Left ventricle myocardium inferior (tissue), 1 donor: ENCODE measurements at regions of chr2 and their contacts with region 1.

Region 1: GRCh38 chr2:44715671-44716081 is 225.8 kb upstream of the SIX3 start:
- DNase-seq: no peak
- H3K4me3 ChIP-seq: no peak overlapping the region
- H3K27ac ChIP-seq: no peak overlapping the region
- H3K4me1 ChIP-seq: peaks cover 3% of the 10 kb centered on the region
- H3K27me3 ChIP-seq: no peaks in the 10 kb centered on the region
- CTCF ChIP-seq: peak; percentile 65

Region 2: DNA sequence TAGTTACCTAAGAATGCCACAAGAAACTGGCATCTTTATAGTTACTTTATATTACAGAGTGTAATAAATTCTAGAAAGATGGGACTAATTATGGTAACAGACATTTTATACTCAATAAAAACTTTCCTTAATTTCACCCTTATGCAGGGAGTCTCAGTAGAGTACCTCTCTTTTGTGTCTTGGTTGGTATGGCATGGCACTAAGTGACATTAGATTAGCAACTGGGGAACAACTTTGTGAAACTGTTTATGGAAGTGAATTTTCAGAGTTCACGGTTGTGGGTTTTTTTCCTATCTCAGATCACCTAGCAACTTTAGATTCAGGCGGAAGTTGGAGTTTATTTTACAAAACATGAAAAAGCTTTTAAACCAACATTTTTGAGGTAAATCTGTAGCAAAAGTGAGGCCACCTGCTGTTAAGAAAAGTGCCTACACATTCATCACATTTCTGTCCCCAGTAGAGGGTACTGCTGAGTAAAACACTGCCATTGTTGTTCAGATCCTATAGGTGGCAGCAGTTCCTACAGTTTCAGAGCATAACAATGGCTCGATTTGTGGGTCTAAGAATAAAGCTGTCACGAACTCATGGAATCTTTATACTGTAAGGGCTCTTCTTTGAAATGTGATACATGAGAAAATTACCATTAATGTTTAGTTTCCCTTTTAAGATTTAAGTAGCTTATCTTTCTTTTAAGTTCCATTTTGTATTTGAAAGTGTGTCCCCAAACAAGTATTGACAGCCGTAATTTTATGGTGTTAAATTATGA is 236.4 kb before region 1 on chr2:
- intact Hi-C with region 1: loop called (anchors 10 kb)
- DNase-seq: no peak
- H3K4me3 ChIP-seq: no peak overlapping the region
- H3K27ac ChIP-seq: no peak overlapping the region
- H3K4me1 ChIP-seq: no peaks in the 10 kb centered on the region
- H3K27me3 ChIP-seq: no peaks in the 10 kb centered on the region
- CTCF ChIP-seq: peak; percentile 99

Region 3: DNA sequence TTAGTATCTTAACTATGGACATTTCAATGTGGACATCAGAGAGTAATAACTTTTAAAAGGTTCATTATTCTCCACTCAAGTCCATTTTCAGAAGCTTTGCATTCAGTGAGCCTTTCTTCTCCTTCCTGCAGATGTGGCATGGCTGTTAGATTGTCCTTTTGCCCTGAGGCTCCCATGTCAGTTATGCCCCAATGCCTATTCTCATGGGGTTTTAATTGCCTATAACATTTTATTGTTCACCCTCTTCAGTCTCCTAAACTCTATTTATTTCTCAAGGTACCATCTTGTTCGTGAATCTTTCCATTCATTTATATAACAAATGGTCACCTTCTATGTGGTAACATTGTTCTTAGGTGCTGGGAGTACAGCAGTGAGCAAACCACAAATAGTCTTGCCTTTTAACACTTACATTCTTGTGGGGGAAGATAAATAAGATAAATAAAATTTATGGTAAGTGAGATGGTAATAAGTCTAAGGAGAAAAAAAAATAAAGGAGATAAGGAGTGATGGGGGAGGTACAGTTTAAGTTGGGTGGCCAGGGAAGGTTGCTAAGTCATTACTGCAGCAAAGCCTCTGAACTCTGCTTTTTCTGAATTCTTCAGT is 52.1 kb before region 1 on chr2:
- intact Hi-C with region 1: no loop called
- DNase-seq: no peak
- H3K4me3 ChIP-seq: no peak overlapping the region
- H3K27ac ChIP-seq: no peak overlapping the region
- H3K4me1 ChIP-seq: no peaks in the 10 kb centered on the region
- H3K27me3 ChIP-seq: no peaks in the 10 kb centered on the region
- CTCF ChIP-seq: no peak

Region 4: GRCh38 chr2:44674473-44675284 is 41.0 kb before region 1 on chr2:
- intact Hi-C with region 1: no loop called
- DNase-seq: no peak
- H3K4me3 ChIP-seq: no peak overlapping the region
- H3K27ac ChIP-seq: no peak overlapping the region
- H3K4me1 ChIP-seq: peaks cover 7% of the 10 kb centered on the region
- H3K27me3 ChIP-seq: no peaks in the 10 kb centered on the region
- CTCF ChIP-seq: no peak